GM12878 (cell line): ENCODE measurements at regions of chr6 and their contacts with region 1.

Region 1: DNA sequence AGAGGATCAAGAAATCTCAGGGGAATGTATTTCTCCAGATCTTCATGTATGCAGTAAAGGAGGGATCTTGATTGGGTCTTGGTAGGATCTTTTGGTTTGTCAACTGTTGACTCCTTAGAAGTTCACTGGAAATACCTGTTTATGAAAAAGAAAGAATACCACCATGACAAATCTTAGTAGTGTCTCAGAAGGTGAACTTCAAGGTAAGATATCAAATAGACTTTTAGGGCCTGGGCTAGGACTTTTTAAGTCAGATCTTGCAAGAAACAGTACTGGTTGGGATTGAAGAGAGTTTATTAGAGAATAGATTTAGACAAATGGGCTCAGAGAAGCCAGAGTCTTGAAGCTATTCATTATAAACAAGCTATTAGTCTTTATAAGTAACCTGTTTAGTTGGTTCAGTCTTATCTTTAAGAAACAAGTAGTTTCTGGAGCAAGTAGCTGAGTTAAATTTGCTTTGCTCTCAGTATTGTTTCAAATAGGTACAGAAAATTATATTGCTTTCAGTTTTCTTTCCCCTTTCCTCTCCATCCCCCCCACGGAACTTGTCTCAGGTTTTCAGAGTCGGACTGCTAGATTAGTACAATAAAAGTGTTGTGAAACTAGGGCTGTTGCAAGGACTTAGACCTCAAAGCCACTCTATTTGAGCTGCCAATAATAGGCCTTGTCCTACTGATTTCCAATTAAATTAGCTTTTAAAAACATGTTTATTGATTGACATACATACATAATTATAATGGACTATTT is 529.1 kb upstream of the CITED2 start:
- DNase-seq: peak; percentile 75
- ATAC-seq: peak; percentile 97
- H3K4me3 ChIP-seq: no peak overlapping the region
- H3K27ac ChIP-seq: peak overlapping the region; percentile 76
- H3K4me1 ChIP-seq: peaks cover 15% of the 10 kb centered on the region; the same call in 1 of the 2 replicates
- H3K27me3 ChIP-seq: no peaks in the 10 kb centered on the region
- CTCF ChIP-seq: no peak
- EP300 ChIP-seq: peak in 1 of 2 experiments; percentile 54; a peak in 2 of 4 replicates
- POLR2A ChIP-seq: no peak
- RAD21 ChIP-seq: peak; percentile 16; the same call in 1 of the 2 replicates

Region 2: GRCh38 chr6:139732451-139732850 is 171.1 kb before region 1 on chr6:
- CTCF ChIA-PET with region 1: no interaction called
- POLR2A ChIA-PET with region 1: no interaction called
- RAD21 ChIA-PET with region 1: no interaction called
- SMC1A ChIA-PET with region 1: no interaction called
- in situ Hi-C with region 1: no loop called
- intact Hi-C with region 1: no loop called
- DNase-seq: no peak
- ATAC-seq: no peak
- H3K4me3 ChIP-seq: no peak overlapping the region
- H3K27ac ChIP-seq: no peak overlapping the region
- H3K4me1 ChIP-seq: 0 out of 2 replicates have a peak, but pooled peaks cover 4% of the 10 kb centered on the region
- H3K27me3 ChIP-seq: no peaks in the 10 kb centered on the region
- CTCF ChIP-seq: no peak
- EP300 ChIP-seq: no peak
- POLR2A ChIP-seq: no peak
- RAD21 ChIP-seq: no peak

Region 3: DNA sequence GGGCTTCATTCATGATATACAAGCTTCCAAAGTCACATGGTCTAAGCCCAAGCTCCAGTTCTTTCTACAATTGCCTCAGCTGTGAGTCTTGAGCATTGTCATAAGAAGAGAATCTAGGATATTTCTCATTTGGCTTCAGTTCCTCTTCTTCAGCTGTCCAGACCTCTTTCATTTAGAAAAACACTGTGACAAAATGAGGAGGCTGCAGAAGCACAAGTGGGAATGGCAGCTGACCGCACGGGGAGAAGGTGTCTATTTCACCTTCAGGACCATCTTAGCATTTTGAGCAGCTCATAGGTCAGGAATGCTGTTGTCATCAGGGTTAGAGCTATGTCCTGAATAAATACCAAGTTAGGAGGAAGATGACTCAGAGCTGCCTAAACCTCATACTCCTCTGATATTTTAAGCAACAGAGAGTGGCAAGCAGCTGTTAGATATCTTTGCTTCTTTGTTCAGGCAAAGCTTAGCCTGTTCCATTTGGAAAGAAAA is 139.0 kb before region 1 on chr6:
- CTCF ChIA-PET with region 1: no interaction called
- POLR2A ChIA-PET with region 1: no interaction called
- RAD21 ChIA-PET with region 1: interaction called, 6 read pairs
- SMC1A ChIA-PET with region 1: interaction called, 12 read pairs
- in situ Hi-C with region 1: no loop called
- intact Hi-C with region 1: no loop called
- DNase-seq: peak; percentile 66
- ATAC-seq: peak; percentile 84
- H3K4me3 ChIP-seq: no peak overlapping the region
- H3K27ac ChIP-seq: peak overlapping the region; percentile 35
- H3K4me1 ChIP-seq: peaks cover 9% of the 10 kb centered on the region; the same call in 1 of the 2 replicates
- H3K27me3 ChIP-seq: no peaks in the 10 kb centered on the region
- CTCF ChIP-seq: no peak
- EP300 ChIP-seq: peak in 1 of 2 experiments; percentile 41; a peak in 1 of 4 replicates
- POLR2A ChIP-seq: no peak
- RAD21 ChIP-seq: no peak

Region 4: GRCh38 chr6:139833592-139833991 is 70.0 kb before region 1 on chr6:
- CTCF ChIA-PET with region 1: no interaction called
- POLR2A ChIA-PET with region 1: no interaction called
- RAD21 ChIA-PET with region 1: no interaction called
- SMC1A ChIA-PET with region 1: no interaction called
- in situ Hi-C with region 1: no loop called
- intact Hi-C with region 1: no loop called
- DNase-seq: no peak
- ATAC-seq: no peak
- H3K4me3 ChIP-seq: no peak overlapping the region
- H3K27ac ChIP-seq: no peak overlapping the region
- H3K4me1 ChIP-seq: no peaks in the 10 kb centered on the region
- H3K27me3 ChIP-seq: no peaks in the 10 kb centered on the region
- CTCF ChIP-seq: no peak
- EP300 ChIP-seq: no peak
- POLR2A ChIP-seq: no peak
- RAD21 ChIP-seq: no peak

Region 5: DNA sequence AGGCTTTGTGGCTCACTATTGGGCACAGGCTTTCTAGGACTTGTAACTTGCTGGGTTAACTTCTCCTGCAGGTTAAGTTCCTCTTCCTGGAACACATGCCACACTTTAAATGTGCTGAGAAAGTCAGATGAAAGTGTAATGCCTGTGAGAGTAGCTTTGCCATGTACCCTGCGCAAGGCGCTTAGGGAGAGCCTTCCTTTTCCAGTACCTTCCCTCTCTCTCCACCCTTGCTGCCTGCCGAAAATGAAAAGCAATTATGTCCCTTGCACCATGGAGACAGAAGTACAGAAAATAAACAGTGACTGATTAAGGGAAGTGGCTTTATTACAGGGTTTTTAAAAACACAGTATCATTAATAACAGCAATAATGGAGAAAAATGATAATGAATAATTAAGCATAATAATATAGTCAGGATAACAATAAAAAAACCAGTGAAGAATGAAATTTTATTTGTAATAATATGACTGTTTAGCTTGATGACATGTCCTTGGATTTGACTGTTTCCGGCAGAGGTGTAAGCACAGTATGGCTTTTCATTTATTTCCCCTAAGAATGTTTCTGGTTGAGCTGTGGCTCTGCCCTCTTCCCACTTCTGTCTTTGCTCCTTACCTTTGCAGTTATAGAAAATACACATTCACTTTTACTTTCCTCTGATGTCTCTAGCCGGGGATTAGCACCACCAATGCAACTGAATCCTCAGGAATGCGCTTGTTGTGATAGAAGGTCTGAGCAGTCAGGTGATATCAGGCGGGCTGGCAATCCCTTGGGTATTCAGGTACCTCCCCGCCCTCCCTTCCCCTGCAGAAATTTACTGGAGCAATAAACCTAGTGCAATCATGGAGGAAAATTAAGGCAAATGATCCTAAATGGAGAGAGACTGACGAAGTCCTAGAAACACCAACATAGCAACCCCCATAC is 56.8 kb before region 1 on chr6:
- CTCF ChIA-PET with region 1: interaction called, 3 read pairs
- POLR2A ChIA-PET with region 1: interaction called, 3 read pairs
- RAD21 ChIA-PET with region 1: interaction called, 13 read pairs
- SMC1A ChIA-PET with region 1: interaction called, 9 read pairs
- in situ Hi-C with region 1: no loop called
- intact Hi-C with region 1: no loop called
- DNase-seq: no peak
- ATAC-seq: peak; percentile 48
- H3K4me3 ChIP-seq: no peak overlapping the region
- H3K27ac ChIP-seq: no peak overlapping the region
- H3K4me1 ChIP-seq: no peaks in the 10 kb centered on the region
- H3K27me3 ChIP-seq: no peaks in the 10 kb centered on the region
- CTCF ChIP-seq: no peak
- EP300 ChIP-seq: no peak
- POLR2A ChIP-seq: no peak
- RAD21 ChIP-seq: no peak

Region 6: GRCh38 chr6:139888681-139889122 is 14.9 kb before region 1 on chr6:
- CTCF ChIA-PET with region 1: interaction called, 15 read pairs
- POLR2A ChIA-PET with region 1: interaction called, 3 read pairs
- RAD21 ChIA-PET with region 1: interaction called, 12 read pairs
- SMC1A ChIA-PET with region 1: interaction called, 21 read pairs
- in situ Hi-C with region 1: no loop called
- intact Hi-C with region 1: no loop called
- DNase-seq: no peak
- ATAC-seq: no peak
- H3K4me3 ChIP-seq: no peak overlapping the region
- H3K27ac ChIP-seq: no peak overlapping the region
- H3K4me1 ChIP-seq: peaks cover 3% of the 10 kb centered on the region
- H3K27me3 ChIP-seq: no peaks in the 10 kb centered on the region
- CTCF ChIP-seq: no peak
- EP300 ChIP-seq: no peak
- POLR2A ChIP-seq: no peak
- RAD21 ChIP-seq: no peak

Region 7: GRCh38 chr6:139920027-139920775 is 16.6 kb after region 1 on chr6:
- CTCF ChIA-PET with region 1: interaction called, 5 read pairs
- POLR2A ChIA-PET with region 1: interaction called, 8 read pairs
- RAD21 ChIA-PET with region 1: interaction called, 18 read pairs
- SMC1A ChIA-PET with region 1: interaction called, 39 read pairs
- in situ Hi-C with region 1: no loop called
- intact Hi-C with region 1: no loop called
- DNase-seq: no peak
- ATAC-seq: no peak; the same call in 2 of the 3 replicates
- H3K4me3 ChIP-seq: no peak overlapping the region
- H3K27ac ChIP-seq: no peak overlapping the region
- H3K4me1 ChIP-seq: peaks cover 3% of the 10 kb centered on the region; the same call in 1 of the 2 replicates
- H3K27me3 ChIP-seq: no peaks in the 10 kb centered on the region; a peak in 1 of 4 replicates
- CTCF ChIP-seq: no peak
- EP300 ChIP-seq: no peak
- POLR2A ChIP-seq: no peak
- RAD21 ChIP-seq: no peak

Region 8: DNA sequence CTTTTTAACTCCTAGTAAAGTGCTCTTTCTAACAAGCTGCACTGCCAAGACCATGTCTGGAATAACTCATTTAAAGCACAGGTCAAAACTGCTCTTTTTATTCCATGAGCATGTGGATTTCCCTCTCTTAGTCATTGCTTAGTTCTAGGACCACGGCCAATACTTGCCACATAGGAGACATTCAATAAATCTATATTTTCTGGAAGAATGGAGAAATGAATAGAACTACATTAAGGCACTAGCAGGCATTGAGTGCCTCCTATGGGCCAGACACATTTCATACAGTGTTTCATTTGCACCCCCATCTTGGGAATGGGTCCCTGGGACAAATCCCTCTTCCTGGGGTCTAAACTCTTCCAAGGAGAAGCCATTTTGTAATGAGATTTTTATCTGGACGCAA is 23.7 kb after region 1 on chr6:
- CTCF ChIA-PET with region 1: interaction called, 5 read pairs
- POLR2A ChIA-PET with region 1: interaction called, 3 read pairs
- RAD21 ChIA-PET with region 1: interaction called, 13 read pairs
- SMC1A ChIA-PET with region 1: interaction called, 39 read pairs
- in situ Hi-C with region 1: no loop called
- intact Hi-C with region 1: no loop called
- DNase-seq: no peak
- ATAC-seq: 0 out of 3 replicates have a peak, but pooled peaks have one; percentile 27
- H3K4me3 ChIP-seq: no peak overlapping the region
- H3K27ac ChIP-seq: no peak overlapping the region
- H3K4me1 ChIP-seq: no peaks in the 10 kb centered on the region
- H3K27me3 ChIP-seq: no peaks in the 10 kb centered on the region
- CTCF ChIP-seq: peak; percentile 28 to 48 (median 31); a peak in 4 of 6 replicates
- EP300 ChIP-seq: no peak
- POLR2A ChIP-seq: no peak
- RAD21 ChIP-seq: peak; percentile 62

Region 9: DNA sequence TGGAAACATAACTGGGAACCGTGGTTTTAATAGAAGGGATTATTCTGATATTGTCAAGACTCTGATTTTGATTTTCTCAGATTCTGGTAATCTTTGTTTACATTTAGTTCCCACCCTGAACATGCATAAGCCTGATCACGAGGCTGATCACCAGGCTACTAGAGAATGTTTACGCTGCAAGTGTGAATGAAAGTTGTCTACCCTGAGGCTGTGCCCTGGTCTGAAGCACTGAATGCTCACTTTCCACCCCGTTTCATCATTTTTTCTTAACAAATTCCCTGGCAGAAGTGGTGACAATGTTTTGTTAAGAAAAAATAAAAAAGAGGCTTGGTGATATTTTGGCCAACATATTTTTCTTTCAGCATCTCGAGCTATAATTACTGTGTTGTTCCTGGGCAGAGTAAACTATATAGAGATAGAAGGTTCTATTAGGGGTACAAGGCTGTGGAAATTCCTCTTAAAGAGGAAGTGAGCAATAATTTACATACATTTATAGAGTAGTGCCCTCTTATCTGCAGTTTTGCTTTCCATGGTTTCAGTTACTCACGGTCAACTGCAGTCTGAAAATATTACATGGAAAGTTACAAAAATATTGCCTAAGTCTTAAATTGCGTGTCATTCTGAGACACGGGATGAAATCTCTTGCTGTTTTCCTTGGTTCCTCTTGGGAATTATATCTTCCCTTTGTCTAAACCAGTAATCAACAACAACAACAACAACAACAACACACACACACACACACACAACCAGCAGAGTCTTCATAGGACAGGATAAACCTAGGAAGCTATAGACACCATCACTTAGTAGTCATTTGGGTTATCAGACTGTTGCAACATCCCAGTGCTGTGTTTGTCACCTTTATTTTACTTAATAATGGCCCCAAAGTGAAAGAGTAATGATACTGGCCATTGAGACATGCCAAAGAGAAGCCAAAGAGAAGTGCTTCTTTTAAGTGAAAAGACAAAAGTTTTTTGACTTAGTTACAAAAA is 37.5 kb after region 1 on chr6:
- CTCF ChIA-PET with region 1: no interaction called
- POLR2A ChIA-PET with region 1: no interaction called
- RAD21 ChIA-PET with region 1: interaction called, 7 read pairs
- SMC1A ChIA-PET with region 1: interaction called, 20 read pairs
- in situ Hi-C with region 1: no loop called
- intact Hi-C with region 1: no loop called
- DNase-seq: peak; percentile 17
- ATAC-seq: peak; percentile 95
- H3K4me3 ChIP-seq: no peak overlapping the region
- H3K27ac ChIP-seq: no peak overlapping the region
- H3K4me1 ChIP-seq: peaks cover 6% of the 10 kb centered on the region; the same call in 1 of the 2 replicates
- H3K27me3 ChIP-seq: no peaks in the 10 kb centered on the region
- CTCF ChIP-seq: no peak
- EP300 ChIP-seq: no peak
- POLR2A ChIP-seq: no peak
- RAD21 ChIP-seq: no peak

Region 10: GRCh38 chr6:141460743-141461484 is 1557.3 kb after region 1 on chr6:
- CTCF ChIA-PET with region 1: no interaction called
- POLR2A ChIA-PET with region 1: no interaction called
- RAD21 ChIA-PET with region 1: no interaction called
- SMC1A ChIA-PET with region 1: no interaction called
- in situ Hi-C with region 1: no loop called
- intact Hi-C with region 1: no loop called
- DNase-seq: no peak
- ATAC-seq: no peak
- H3K4me3 ChIP-seq: no peak overlapping the region
- H3K27ac ChIP-seq: no peak overlapping the region
- H3K4me1 ChIP-seq: peaks cover 9% of the 10 kb centered on the region
- H3K27me3 ChIP-seq: no peaks in the 10 kb centered on the region
- CTCF ChIP-seq: no peak
- EP300 ChIP-seq: no peak
- POLR2A ChIP-seq: no peak
- RAD21 ChIP-seq: no peak